ENCODE measurements at regions of chr11 and their contacts with region 1.

Region 1: GRCh38 chr11:113705871-113706655 is at the start of gene TMPRSS5:
- DNase-seq: no peak
- H3K4me3 ChIP-seq: no peak within 1 kb of the TSS
- H3K27me3 ChIP-seq: no peaks in the 10 kb centered on the region
- CTCF ChIP-seq: no peak
- polyA plus RNA-seq, gene TMPRSS5: 0.10 and 0.21 TPM in 2 replicates

Region 2: DNA sequence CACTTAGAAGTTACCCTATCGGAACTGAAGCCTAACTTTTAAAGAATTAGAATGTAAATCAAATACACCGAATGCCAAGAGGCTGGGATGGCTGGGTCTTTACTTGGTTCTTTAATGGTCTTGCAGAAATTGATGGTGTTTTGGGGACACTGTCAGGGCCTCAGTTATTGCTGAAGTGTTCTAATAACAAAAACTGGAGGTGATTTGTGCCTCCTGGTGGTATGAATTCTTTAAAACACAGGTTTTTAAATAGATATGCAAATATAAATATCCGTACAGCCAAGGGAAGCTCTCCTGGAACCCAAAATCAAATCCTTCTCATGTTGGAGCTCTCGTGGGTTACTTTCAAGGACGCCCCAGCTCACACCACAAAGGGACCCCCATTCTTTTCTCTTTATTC is 19.3 kb after region 1 on chr11:
- CTCF ChIA-PET with region 1: no interaction called
- POLR2A ChIA-PET with region 1: interaction called, 10 read pairs
- DNase-seq: no peak
- H3K4me3 ChIP-seq: no peak overlapping the region
- H3K27me3 ChIP-seq: no peaks in the 10 kb centered on the region
- CTCF ChIP-seq: no peak

Measured in BJ (cell line).